ENCODE measurements at regions of chr1 and their contacts with region 1.

Region 1: GRCh38 chr1:203038891-203039608 is 12.8 kb downstream of the PPFIA4 start:
- DNase-seq: peak; percentile 68 to 86
- ATAC-seq: peak; percentile 71 to 93
- H3K4me3 ChIP-seq: no peak overlapping the region
- H3K27ac ChIP-seq: peak overlapping the region in 1 of 2 experiments; percentile 40; a peak in 2 of 6 replicates
- H3K4me1 ChIP-seq: peaks cover 15% of the 10 kb centered on the region; the same call in 2 of the 3 replicates
- CTCF ChIP-seq: peak; percentile 87
- EP300 ChIP-seq: no peak
- POLR2A ChIP-seq: no peak
- RAD21 ChIP-seq: peak; percentile 89 to 91

Region 2: DNA sequence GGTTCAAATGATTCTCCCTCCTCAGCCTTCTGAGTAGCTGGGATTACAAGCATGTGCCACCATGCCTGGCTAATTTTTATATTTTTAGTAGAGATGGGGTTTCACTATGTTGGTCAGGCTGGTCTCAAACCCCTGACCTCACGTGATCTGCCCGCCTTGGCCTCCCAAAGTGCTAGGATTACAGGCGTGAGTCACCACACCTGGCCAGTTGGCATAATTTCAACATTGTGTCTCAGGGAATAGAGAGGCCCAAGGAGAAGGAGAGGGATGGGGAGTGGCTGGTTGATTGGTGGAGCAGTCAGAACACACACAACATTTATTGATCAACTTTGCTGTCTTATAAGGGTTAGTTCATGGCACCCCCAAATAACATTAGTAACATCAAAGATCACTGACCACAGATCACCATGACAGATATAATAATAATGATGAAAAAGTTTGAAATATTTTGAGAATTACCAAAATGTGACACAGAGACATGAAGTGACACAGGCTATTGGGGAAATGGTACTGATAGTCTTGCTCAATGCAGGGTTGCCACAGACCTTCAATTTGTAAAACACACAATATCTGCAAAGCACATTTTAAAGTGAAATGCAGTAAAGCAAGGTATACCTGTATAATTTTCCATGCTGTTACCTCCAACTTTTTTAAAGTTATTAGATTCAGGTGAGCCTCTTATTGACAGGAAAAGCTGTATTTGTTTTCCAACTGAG is 56.2 kb before region 1 on chr1:
- CTCF ChIA-PET with region 1: no interaction called
- POLR2A ChIA-PET with region 1: no interaction called
- DNase-seq: no peak
- ATAC-seq: no peak
- H3K4me3 ChIP-seq: no peak overlapping the region
- H3K27ac ChIP-seq: no peak overlapping the region
- H3K4me1 ChIP-seq: no peaks in the 10 kb centered on the region
- CTCF ChIP-seq: no peak
- EP300 ChIP-seq: no peak
- POLR2A ChIP-seq: no peak
- RAD21 ChIP-seq: no peak

Region 3: DNA sequence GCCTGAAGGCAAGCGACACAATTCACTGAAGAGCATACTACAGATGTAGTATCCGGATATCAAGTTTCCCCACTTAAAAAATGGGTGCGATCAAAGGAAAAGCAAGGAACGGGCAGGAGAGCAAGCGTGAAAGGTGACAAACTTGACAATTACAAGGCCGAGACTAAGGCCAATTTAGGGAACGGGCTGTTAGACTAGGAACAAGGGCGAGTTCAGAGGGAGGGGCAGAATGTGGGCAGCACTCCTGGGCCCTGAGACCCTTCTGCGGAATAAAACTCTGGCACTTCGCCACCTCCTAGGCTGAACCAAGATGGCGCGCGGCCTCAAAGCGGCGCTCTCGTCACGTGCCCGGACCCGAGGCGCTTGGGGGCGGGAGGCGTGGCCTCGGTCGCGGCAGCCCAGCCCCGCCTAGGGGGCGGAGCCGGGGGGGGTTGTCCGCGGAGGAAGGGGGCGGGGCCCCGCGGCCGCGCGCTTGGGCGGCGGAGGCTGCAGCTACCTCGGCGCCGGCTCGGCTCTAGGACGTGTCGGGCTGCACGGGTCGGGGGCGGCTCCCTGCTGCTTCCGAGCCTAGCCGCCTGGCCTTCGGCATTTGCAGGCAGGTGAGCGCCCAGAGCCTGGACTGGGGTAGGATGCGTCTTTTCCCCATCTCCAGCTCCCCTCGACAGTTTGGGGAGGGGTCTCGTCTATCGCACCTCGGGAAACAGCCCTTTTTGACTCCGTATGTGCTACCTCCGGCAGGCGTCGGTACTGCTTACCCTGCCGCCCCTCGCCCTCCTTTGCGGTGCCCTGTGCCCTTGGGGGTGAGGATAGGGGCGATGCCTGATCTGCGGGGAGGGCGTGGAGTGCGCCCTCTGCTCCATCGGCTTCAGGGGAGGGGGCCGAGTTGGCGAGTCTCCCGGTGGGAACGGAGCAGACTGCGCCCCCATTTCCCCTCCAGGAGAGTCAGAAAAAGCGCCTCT is 12.7 kb before region 1 on chr1 and contains the start of gene PPFIA4:
- CTCF ChIA-PET with region 1: interaction called, 100 read pairs
- POLR2A ChIA-PET with region 1: no interaction called
- DNase-seq: peak; percentile 72 to 87
- ATAC-seq: peak; percentile 68 to 90
- H3K4me3 ChIP-seq: peak within 1 kb of the TSS; percentile 58
- H3K27ac ChIP-seq: peak within 1 kb of the TSS; percentile 59 to 84; a peak in 5 of 6 replicates
- H3K4me1 ChIP-seq: no peaks in the 10 kb centered on the region
- CTCF ChIP-seq: no peak
- EP300 ChIP-seq: no peak
- POLR2A ChIP-seq: peak; percentile 37
- RAD21 ChIP-seq: peak; percentile 12 to 24; a peak in 2 of 5 replicates
- polyA plus RNA-seq, gene PPFIA4: 0.47 and 1.0 TPM in 2 replicates

Region 4: GRCh38 chr1:203112301-203112874 is 73.3 kb after region 1 on chr1:
- CTCF ChIA-PET with region 1: interaction called, 48 read pairs
- POLR2A ChIA-PET with region 1: no interaction called
- DNase-seq: no peak
- ATAC-seq: no peak
- H3K4me3 ChIP-seq: no peak overlapping the region
- H3K27ac ChIP-seq: no peak overlapping the region
- H3K4me1 ChIP-seq: no peaks in the 10 kb centered on the region
- CTCF ChIP-seq: no peak
- EP300 ChIP-seq: no peak
- POLR2A ChIP-seq: no peak
- RAD21 ChIP-seq: no peak

Region 5: DNA sequence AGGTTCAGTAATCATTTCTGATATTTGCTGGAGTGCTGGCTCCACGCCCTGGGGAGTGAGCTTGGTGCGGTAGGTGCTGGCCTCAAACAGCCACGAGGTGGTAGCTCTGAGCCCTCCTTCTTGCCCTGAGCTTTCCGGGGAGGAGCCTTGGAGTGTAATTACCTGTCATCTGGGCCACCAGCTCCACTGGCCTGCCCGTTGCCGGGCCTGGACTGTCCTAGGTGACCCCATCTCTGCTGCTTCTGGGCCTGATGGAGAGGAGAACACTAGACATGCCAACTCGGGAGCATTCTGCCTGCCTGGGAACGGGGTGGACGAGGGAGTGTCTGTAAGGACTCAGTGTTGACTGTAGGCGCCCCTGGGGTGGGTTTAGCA is 127.5 kb after region 1 on chr1:
- CTCF ChIA-PET with region 1: interaction called, 188 read pairs
- POLR2A ChIA-PET with region 1: no interaction called
- DNase-seq: peak in 1 of 2 experiments; percentile 15
- ATAC-seq: peak; percentile 38 to 84; a peak in 4 of 6 replicates
- H3K4me3 ChIP-seq: no peak overlapping the region
- H3K27ac ChIP-seq: no peak overlapping the region
- H3K4me1 ChIP-seq: no peaks in the 10 kb centered on the region
- CTCF ChIP-seq: peak; percentile 26; the same call in 1 of the 3 replicates
- EP300 ChIP-seq: no peak
- POLR2A ChIP-seq: no peak
- RAD21 ChIP-seq: peak in 1 of 2 experiments; percentile 16; a peak in 1 of 5 replicates

Region 6: GRCh38 chr1:203202431-203203245 is 163.6 kb after region 1 on chr1:
- CTCF ChIA-PET with region 1: interaction called, 25 read pairs
- POLR2A ChIA-PET with region 1: no interaction called
- DNase-seq: no peak
- ATAC-seq: no peak
- H3K4me3 ChIP-seq: no peak overlapping the region
- H3K27ac ChIP-seq: no peak overlapping the region
- H3K4me1 ChIP-seq: peaks cover 5% of the 10 kb centered on the region; the same call in 1 of the 3 replicates
- CTCF ChIP-seq: no peak
- EP300 ChIP-seq: no peak
- POLR2A ChIP-seq: no peak
- RAD21 ChIP-seq: no peak

Region 7: DNA sequence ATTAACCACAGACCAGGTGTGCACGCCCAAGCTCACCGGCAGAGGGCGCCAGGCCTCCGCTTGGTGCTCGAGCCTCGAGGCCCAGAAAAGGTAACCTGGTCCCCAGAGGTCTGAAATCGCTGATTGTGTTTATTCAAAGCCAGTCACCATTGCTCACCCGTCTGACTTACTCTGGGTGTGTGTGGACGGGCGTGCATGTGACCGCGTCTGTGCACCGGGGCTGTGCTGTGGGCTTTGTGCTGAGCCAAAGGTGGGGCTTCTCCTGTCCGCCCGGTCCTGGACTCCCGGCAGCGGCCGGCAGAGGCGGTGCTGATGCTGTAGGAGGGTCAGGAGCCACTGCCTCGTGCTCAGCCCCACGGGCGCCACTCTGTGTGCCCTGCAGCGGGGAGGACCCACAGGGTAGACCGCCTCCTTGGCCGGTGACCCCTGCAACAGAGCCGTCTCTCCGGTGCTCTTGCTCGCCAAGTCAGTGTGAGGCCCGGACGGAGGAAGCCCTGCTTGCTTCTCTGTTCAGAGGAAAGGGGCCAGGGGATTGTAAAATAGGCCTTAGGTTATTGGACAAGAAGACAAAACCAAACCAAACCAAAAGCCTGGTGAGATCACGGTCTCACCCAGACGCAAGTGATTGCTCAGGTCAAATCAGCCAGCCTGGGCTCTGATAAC is 234.3 kb after region 1 on chr1:
- CTCF ChIA-PET with region 1: interaction called, 266 read pairs
- POLR2A ChIA-PET with region 1: interaction called, 8 read pairs
- DNase-seq: peak; percentile 73 to 82
- ATAC-seq: peak; percentile 73 to 88
- H3K4me3 ChIP-seq: no peak overlapping the region
- H3K27ac ChIP-seq: peak overlapping the region; percentile 29 to 67; a peak in 4 of 6 replicates
- H3K4me1 ChIP-seq: peaks cover 9% of the 10 kb centered on the region
- CTCF ChIP-seq: peak; percentile 97
- EP300 ChIP-seq: no peak
- POLR2A ChIP-seq: no peak
- RAD21 ChIP-seq: peak; percentile 93 to 95

Measured in A549 (cell line).